ENCODE measurements at regions of chr10 and their contacts with region 1.

Region 1: GRCh38 chr10:24901686-24902399 is 50.6 kb downstream of the PRTFDC1 start:
- DNase-seq: peak; percentile 47
- H3K4me3 Mint-ChIP-seq: no peak overlapping the region
- H3K27ac Mint-ChIP-seq: peak overlapping the region; percentile 25
- H3K4me1 Mint-ChIP-seq: peaks cover 47% of the 10 kb centered on the region
- H3K27me3 Mint-ChIP-seq: no peaks in the 10 kb centered on the region

Region 2: GRCh38 chr10:24674892-24675632 is 226.8 kb before region 1 on chr10:
- CTCF ChIA-PET with region 1: no interaction called
- POLR2A ChIA-PET with region 1: no interaction called
- intact Hi-C with region 1: loop called (anchors 1 kb)
- DNase-seq: no peak
- H3K4me3 Mint-ChIP-seq: no peak overlapping the region
- H3K27ac Mint-ChIP-seq: no peak overlapping the region
- H3K4me1 Mint-ChIP-seq: peaks cover 13% of the 10 kb centered on the region
- H3K27me3 Mint-ChIP-seq: no peaks in the 10 kb centered on the region

Region 3: GRCh38 chr10:24724381-24725228 is 177.2 kb before region 1 on chr10:
- CTCF ChIA-PET with region 1: no interaction called
- POLR2A ChIA-PET with region 1: interaction called, 3 read pairs
- intact Hi-C with region 1: loop called (anchors 1 kb)
- DNase-seq: peak; percentile 97
- H3K4me3 Mint-ChIP-seq: peak overlapping the region; percentile 88
- H3K27ac Mint-ChIP-seq: peak overlapping the region; percentile 93
- H3K4me1 Mint-ChIP-seq: peaks cover 19% of the 10 kb centered on the region
- H3K27me3 Mint-ChIP-seq: no peaks in the 10 kb centered on the region

Region 4: DNA sequence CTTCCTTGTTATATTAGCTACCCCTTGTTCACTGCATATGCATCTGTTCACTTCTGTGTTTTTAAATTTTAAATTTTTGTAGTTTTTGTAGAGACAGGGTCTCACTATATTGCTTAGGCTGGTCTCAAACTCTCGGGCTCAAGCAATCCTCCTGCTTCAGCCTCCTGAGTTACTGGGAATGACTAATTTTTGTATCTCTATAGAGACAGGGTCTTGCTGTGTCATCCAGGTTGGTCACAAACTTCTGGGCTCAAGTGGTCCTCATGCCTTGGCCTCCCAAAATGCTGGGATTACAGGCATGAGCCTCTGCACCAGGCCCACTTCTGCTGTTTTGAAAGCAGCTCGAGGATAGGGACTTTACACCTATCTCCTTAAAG is 14.0 kb before region 1 on chr10:
- CTCF ChIA-PET with region 1: interaction called, 8 read pairs
- POLR2A ChIA-PET with region 1: interaction called, 3 read pairs
- intact Hi-C with region 1: loop called (anchors 1 kb)
- DNase-seq: no peak
- H3K4me3 Mint-ChIP-seq: no peak overlapping the region
- H3K27ac Mint-ChIP-seq: peak overlapping the region; percentile 76
- H3K4me1 Mint-ChIP-seq: peaks cover 35% of the 10 kb centered on the region
- H3K27me3 Mint-ChIP-seq: no peaks in the 10 kb centered on the region

Region 5: GRCh38 chr10:24947304-24948097 is 45.7 kb after region 1 on chr10:
- CTCF ChIA-PET with region 1: interaction called, 4 read pairs
- POLR2A ChIA-PET with region 1: no interaction called
- intact Hi-C with region 1: loop called (anchors 1 kb)
- DNase-seq: no peak
- H3K4me3 Mint-ChIP-seq: no peak overlapping the region
- H3K27ac Mint-ChIP-seq: no peak overlapping the region
- H3K4me1 Mint-ChIP-seq: peaks cover 29% of the 10 kb centered on the region
- H3K27me3 Mint-ChIP-seq: peaks cover 4% of the 10 kb centered on the region

Measured in activated CD4-positive, alpha-beta memory T cell treated with anti-CD3 and anti-CD28 coated beads for 36 hours (primary cell).